Activated naive CD4-positive, alpha-beta T cell treated with anti-CD3 and anti-CD28 coated beads for 36 hours (primary cell): ENCODE measurements at regions of chr16 and their contacts with region 1.

Region 1: DNA sequence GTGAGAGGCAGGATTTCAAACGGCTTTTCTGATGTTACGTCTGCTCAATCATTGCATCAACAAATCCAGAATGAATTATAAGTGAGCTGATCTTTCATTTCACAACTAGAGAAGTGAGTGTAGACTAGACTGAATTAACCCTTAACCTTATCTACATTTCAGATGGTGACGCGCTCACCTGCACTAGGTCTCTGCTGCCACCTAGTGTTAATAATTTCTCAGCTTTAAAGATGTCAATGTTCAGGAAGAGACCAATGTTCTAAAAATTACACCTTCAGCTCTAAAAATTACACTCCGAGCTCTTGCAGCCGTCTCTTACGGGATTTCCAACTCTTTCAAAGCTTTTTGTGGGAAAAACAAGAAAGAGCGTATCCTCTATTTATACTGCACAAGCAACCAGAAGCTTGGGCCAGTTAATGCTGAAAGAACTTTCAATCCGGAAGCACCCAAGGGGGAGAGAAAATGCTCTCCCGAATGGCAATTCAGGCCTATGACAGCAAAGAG is 88.2 kb upstream of the FA2H start:
- DNase-seq: peak; percentile 42
- H3K4me3 Mint-ChIP-seq: no peak overlapping the region
- H3K27ac Mint-ChIP-seq: no peak overlapping the region
- H3K4me1 Mint-ChIP-seq: peaks cover 8% of the 10 kb centered on the region
- H3K27me3 Mint-ChIP-seq: no peaks in the 10 kb centered on the region

Region 2: DNA sequence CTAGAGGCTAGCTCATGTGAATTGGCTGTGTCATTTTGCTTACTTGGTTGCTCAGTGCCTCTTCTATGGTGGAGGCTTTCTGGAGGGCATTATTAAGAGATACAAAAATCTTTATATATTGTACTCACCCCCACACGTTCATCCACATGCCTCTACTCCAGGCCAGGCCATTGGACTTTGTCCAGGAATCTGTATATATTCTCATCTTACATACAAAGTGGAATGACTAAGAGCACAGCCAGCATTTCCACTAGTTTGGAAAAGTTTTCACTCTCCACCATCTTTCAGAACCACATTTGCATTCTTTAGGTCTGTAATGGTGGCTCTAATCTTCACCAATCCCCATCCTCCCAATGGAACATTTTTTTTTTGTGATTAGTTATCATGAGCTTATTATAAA is 251.1 kb before region 1 on chr16:
- CTCF ChIA-PET with region 1: no interaction called
- intact Hi-C with region 1: no loop called
- DNase-seq: no peak
- H3K4me3 Mint-ChIP-seq: no peak overlapping the region
- H3K27ac Mint-ChIP-seq: no peak overlapping the region
- H3K4me1 Mint-ChIP-seq: peaks cover 25% of the 10 kb centered on the region
- H3K27me3 Mint-ChIP-seq: no peaks in the 10 kb centered on the region

Region 3: DNA sequence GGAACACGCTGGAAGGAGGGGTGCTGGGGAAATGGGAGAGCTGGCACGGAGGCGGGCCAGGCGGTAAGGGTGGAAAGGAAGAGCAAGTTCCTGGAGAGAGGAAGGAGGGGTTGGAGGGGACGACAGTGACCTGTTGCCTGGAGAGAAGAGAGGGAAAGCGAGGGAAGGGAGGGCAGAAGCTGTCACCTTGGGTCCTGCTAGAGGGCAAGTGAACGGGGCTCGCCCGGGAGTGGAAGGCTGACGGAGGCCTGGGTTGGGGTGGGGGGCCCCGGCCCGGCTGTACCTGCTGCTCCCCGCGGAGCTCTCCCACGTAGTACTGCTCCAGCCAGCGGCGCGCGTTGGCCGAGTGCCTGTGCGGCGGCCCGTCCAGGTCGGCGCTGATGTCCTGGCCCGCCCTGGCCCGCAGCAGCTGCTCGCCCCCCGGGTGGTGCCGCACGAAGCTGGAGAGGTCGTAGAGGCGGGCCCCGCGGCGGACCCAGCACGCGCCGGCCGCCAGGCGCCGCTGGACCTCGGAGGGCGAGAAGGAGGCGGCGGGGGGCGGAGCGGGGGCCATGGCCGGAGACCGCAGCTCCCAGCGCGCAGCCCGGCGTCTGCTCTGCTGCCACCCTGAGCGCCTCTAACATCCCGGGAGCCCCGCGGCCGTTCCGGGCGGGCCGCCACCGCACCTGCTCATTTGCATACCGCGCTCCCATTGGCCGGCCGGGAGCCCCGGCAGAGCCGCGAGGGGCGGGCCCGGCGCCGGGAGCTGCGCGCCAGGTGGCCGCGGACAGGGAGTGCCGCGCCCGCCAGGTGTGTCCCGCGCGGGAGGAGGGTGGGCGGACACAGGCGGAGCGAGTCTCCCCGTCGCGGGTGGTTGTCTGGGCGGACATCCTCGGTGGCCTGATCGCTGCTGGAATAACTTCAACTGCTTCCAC is 88.3 kb before region 1 on chr16 and contains the start of gene FA2H:
- CTCF ChIA-PET with region 1: interaction called, 11 read pairs
- intact Hi-C with region 1: loop called (anchors 5 kb)
- DNase-seq: peak; percentile 79
- H3K4me3 Mint-ChIP-seq: peak within 1 kb of the TSS; percentile 62
- H3K27ac Mint-ChIP-seq: no peak within 1 kb of the TSS
- H3K4me1 Mint-ChIP-seq: peaks cover 12% of the 10 kb centered on the region
- H3K27me3 Mint-ChIP-seq: peaks cover 33% of the 10 kb centered on the region
- total RNA-seq, gene FA2H: 0.15 TPM in 1 of 2 experiments, not detected in the other

Region 4: GRCh38 chr16:74813109-74813641 is 49.6 kb before region 1 on chr16:
- CTCF ChIA-PET with region 1: interaction called, 61 read pairs
- intact Hi-C with region 1: loop called (anchors 1 kb)
- DNase-seq: peak; percentile 84
- H3K4me3 Mint-ChIP-seq: no peak overlapping the region
- H3K27ac Mint-ChIP-seq: no peak overlapping the region
- H3K4me1 Mint-ChIP-seq: peaks cover 3% of the 10 kb centered on the region
- H3K27me3 Mint-ChIP-seq: no peaks in the 10 kb centered on the region

Region 5: GRCh38 chr16:74999609-75000480 is 137.1 kb after region 1 on chr16:
- CTCF ChIA-PET with region 1: no interaction called
- intact Hi-C with region 1: no loop called
- DNase-seq: peak; percentile 77
- H3K4me3 Mint-ChIP-seq: peak overlapping the region; percentile 78
- H3K27ac Mint-ChIP-seq: no peak overlapping the region
- H3K4me1 Mint-ChIP-seq: peaks cover 26% of the 10 kb centered on the region
- H3K27me3 Mint-ChIP-seq: peaks cover 12% of the 10 kb centered on the region

Region 6: GRCh38 chr16:75099756-75100602 is 237.2 kb after region 1 on chr16:
- CTCF ChIA-PET with region 1: no interaction called
- intact Hi-C with region 1: no loop called
- DNase-seq: peak; percentile 74
- H3K4me3 Mint-ChIP-seq: no peak overlapping the region
- H3K27ac Mint-ChIP-seq: peak overlapping the region; percentile 68
- H3K4me1 Mint-ChIP-seq: peaks cover 39% of the 10 kb centered on the region
- H3K27me3 Mint-ChIP-seq: no peaks in the 10 kb centered on the region